B cell (primary cell): ENCODE measurements at regions of chr6 and their contacts with region 1.

Region 1: GRCh38 chr6:167093922-167094432 is 28.9 kb upstream of the CCR6 start:
- DNase-seq: peak; percentile 94
- ATAC-seq: peak; percentile 48
- H3K4me3 ChIP-seq: peak overlapping the region; percentile 13 to 80 (median 64)
- H3K4me3 Mint-ChIP-seq: peak overlapping the region; percentile 94
- H3K27ac ChIP-seq: peak overlapping the region; percentile 98 to 99
- H3K27ac Mint-ChIP-seq: peak overlapping the region; percentile 98
- H3K4me1 ChIP-seq: peaks cover 99% of the 10 kb centered on the region in 2 donors
- H3K4me1 Mint-ChIP-seq: peaks cover 93% of the 10 kb centered on the region
- H3K27me3 ChIP-seq: no peaks in the 10 kb centered on the region
- H3K27me3 Mint-ChIP-seq: no peaks in the 10 kb centered on the region
- CTCF ChIP-seq: no peak

Region 2: DNA sequence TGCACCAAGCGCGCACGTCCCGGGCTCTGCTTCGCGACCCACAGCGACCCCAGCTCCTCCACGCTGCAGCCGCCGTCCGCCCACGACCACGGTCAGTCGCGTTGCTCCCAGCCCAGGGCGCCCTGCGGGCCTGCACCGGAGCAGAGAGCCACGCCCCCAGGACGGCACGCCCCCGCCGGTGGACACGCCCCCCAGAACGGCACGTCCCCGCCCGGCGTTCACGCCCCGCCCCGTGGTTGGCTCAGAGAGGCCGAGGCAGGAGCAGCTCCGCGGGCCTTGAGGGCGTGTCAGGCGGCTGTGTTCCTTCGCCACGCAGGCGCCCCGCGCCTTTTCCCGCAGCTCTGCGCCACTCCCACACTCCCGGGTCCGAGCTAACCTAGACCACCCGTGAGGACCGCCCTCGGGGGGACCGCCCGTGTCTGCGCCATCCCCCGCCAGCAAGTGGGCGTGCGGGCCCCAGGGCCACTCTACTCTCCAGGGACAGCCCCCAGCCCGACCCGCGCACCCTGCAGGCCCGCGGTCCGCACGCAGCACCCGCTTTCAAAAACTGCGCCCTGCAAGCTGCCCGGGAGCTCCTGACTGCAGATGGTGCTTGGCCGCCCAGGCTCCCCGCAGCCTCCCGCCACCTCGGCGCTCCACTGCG is 137.4 kb before region 1 on chr6 and contains the start of gene RNASET2:
- CTCF ChIA-PET with region 1: interaction called, 7 read pairs
- POLR2A ChIA-PET with region 1: interaction called, 7 read pairs
- intact Hi-C with region 1: loop called (anchors 1 kb)
- DNase-seq: peak; percentile 96
- ATAC-seq: peak; percentile 85
- H3K4me3 ChIP-seq: peak within 1 kb of the TSS; percentile 79 to 97 (median 89)
- H3K4me3 Mint-ChIP-seq: peak within 1 kb of the TSS; percentile 93
- H3K27ac ChIP-seq: peak within 1 kb of the TSS; percentile 94 to 98
- H3K27ac Mint-ChIP-seq: peak within 1 kb of the TSS; percentile 100
- H3K4me1 ChIP-seq: peaks cover 65 to 78% of the 10 kb centered on the region in 2 donors
- H3K4me1 Mint-ChIP-seq: peaks cover 73% of the 10 kb centered on the region
- H3K27me3 ChIP-seq: no peaks in the 10 kb centered on the region
- H3K27me3 Mint-ChIP-seq: no peaks in the 10 kb centered on the region
- CTCF ChIP-seq: no peak
- total RNA-seq, gene RNASET2: 293 and 302 TPM in 2 replicates

Region 3: DNA sequence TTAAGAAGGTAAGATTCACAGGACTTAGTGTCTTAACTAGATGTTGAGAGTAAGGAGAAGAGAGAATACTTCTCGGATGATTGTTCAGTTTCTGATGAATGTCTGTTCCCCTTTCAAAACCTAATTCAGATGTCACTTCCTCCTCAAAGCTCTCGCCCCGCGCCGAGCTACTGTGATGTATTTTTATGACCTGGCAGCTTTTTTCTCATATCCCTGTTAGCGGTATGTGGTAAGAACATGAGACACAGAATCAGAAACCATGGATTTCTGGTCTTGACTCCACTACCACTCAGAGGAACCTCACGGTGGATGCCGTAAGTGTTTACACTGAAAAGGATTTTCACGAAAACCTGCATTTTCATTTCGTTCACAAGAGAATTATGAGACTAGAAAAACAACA is 46.4 kb before region 1 on chr6:
- CTCF ChIA-PET with region 1: interaction called, 8 read pairs
- POLR2A ChIA-PET with region 1: interaction called, 15 read pairs
- intact Hi-C with region 1: loop called (anchors 2 kb)
- DNase-seq: peak; percentile 86
- ATAC-seq: peak; percentile 81
- H3K4me3 ChIP-seq: peak overlapping the region in 4 of 5 experiments; percentile 31 to 57 (median 44)
- H3K4me3 Mint-ChIP-seq: peak overlapping the region; percentile 57
- H3K27ac ChIP-seq: peak overlapping the region; percentile 70 to 88
- H3K27ac Mint-ChIP-seq: peak overlapping the region; percentile 79
- H3K4me1 ChIP-seq: peaks cover 36 to 47% of the 10 kb centered on the region in 2 donors
- H3K4me1 Mint-ChIP-seq: peaks cover 55% of the 10 kb centered on the region
- H3K27me3 ChIP-seq: no peaks in the 10 kb centered on the region
- H3K27me3 Mint-ChIP-seq: no peaks in the 10 kb centered on the region
- CTCF ChIP-seq: no peak

Region 4: DNA sequence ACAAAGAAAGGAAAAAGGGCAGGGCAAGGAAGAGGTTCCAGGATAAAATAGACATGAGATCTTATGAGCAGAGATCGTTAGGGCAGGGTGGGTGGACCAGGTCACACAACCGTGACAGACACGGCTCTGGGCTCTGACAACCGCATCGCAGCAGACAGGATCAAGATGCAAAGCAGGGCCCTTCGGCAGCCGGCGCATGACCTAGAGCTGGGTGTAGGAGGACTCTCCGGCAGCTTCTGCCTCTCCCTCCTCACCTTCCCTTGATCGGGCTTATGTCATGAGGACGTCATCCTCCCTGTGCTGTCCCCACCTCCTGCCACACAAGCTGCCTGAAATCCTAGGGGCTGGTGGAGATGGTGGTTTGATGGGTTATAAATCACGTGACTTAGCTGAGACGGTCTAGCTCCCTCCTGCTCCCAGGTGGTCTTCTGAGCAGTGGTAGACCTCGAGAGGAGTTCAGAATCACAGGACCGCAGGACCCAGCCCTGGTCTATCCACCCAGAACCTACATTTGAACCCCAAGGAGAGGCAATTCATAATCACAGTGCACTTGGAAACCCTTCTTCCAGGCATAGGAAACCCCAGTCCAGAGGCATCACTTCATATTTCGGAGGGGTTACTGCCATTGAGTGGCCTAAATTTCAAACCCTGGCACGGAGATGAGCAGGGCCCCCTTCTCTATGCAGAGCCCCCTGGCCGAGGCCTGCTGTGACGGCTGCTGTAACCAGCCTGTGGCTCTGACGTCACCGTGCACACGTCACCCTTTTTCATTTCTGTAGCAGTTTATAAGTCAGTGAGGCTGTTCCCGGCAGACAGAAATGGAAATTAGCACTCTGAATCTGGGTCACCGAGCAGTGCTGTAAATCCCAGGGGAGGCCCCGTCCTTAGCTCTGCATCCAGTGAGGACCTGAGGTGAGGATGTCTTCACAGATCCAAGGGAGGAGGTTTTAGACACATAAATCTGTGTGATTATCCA is 20.2 kb after region 1 on chr6:
- CTCF ChIA-PET with region 1: interaction called, 168 read pairs
- POLR2A ChIA-PET with region 1: interaction called, 432 read pairs
- intact Hi-C with region 1: loop called (anchors 1 kb)
- DNase-seq: peak; percentile 98
- ATAC-seq: peak; percentile 78
- H3K4me3 ChIP-seq: peak overlapping the region; percentile 46 to 77 (median 61)
- H3K4me3 Mint-ChIP-seq: peak overlapping the region; percentile 84
- H3K27ac ChIP-seq: peak overlapping the region; percentile 98 to 100
- H3K27ac Mint-ChIP-seq: peak overlapping the region; percentile 96
- H3K4me1 ChIP-seq: peaks cover 85 to 94% of the 10 kb centered on the region in 2 donors
- H3K4me1 Mint-ChIP-seq: peaks cover 94% of the 10 kb centered on the region
- H3K27me3 ChIP-seq: no peaks in the 10 kb centered on the region
- H3K27me3 Mint-ChIP-seq: no peaks in the 10 kb centered on the region
- CTCF ChIP-seq: no peak

Region 5: DNA sequence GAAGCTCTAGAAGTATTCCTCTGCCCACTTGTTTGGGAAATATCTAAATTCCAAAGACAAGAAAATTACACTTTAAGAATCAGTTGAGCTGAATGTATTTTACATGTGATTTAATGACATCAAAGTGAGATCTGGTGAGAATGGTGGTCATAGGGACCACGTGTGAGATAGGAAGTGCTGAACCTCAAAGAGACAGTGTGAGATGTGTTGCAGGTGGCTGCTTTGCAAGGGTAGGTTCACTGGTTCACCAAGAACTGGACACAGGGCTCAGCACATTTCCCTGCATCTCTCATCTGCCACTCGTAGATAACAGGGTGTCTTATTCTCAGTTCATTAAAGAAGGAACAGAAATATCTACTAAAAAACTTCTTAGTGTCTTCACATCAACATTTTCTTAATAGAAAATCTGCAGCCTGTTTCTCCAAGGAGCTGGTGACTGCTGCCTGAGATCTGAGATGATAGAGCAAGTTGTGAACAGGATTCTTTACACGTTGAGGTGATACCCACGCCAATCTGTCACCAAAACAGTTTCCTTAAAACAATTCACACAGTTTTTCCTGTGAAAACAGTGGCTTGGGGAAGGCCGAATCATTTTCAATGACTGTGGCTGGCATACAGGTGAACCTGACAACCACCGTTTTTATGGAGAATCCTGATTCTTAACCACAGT is 36.2 kb after region 1 on chr6:
- CTCF ChIA-PET with region 1: interaction called, 168 read pairs
- POLR2A ChIA-PET with region 1: interaction called, 432 read pairs
- intact Hi-C with region 1: loop called (anchors 1 kb)
- DNase-seq: peak; percentile 70
- ATAC-seq: peak; percentile 26
- H3K4me3 ChIP-seq: peak overlapping the region in 1 of 5 experiments; percentile 21
- H3K4me3 Mint-ChIP-seq: peak overlapping the region; percentile 53
- H3K27ac ChIP-seq: peak overlapping the region; percentile 82 to 92
- H3K27ac Mint-ChIP-seq: peak overlapping the region; percentile 100
- H3K4me1 ChIP-seq: peaks cover 78 to 82% of the 10 kb centered on the region in 2 donors
- H3K4me1 Mint-ChIP-seq: peaks cover 88% of the 10 kb centered on the region
- H3K27me3 ChIP-seq: no peaks in the 10 kb centered on the region
- H3K27me3 Mint-ChIP-seq: no peaks in the 10 kb centered on the region
- CTCF ChIP-seq: no peak